ENCODE measurements at regions of chr13 and their contacts with region 1.

Region 1: GRCh38 chr13:24254146-24254841 is 55.1 kb upstream of the C1QTNF9 start:
- DNase-seq: peak; percentile 55 to 88
- ATAC-seq: peak; percentile 49 to 52 (median 51)
- H3K4me3 ChIP-seq: peak overlapping the region; percentile 72
- H3K4me3 Mint-ChIP-seq: peak overlapping the region; percentile 98
- H3K27ac ChIP-seq: peak overlapping the region; percentile 81
- H3K27ac Mint-ChIP-seq: peak overlapping the region; percentile 90 to 99
- H3K4me1 ChIP-seq: peaks cover 62% of the 10 kb centered on the region
- H3K4me1 Mint-ChIP-seq: peaks cover 76 to 88% of the 10 kb centered on the region in 2 donors
- H3K27me3 ChIP-seq: no peaks in the 10 kb centered on the region
- H3K27me3 Mint-ChIP-seq: no peaks in the 10 kb centered on the region
- CTCF ChIP-seq: no peak

Region 2: GRCh38 chr13:24020375-24020830 is 233.9 kb before region 1 on chr13:
- intact Hi-C with region 1: no loop called
- DNase-seq: peak in 1 of 2 donors; percentile 63
- ATAC-seq: peak in 1 of 3 donors; percentile 54
- H3K4me3 ChIP-seq: no peak overlapping the region
- H3K4me3 Mint-ChIP-seq: no peak overlapping the region
- H3K27ac ChIP-seq: no peak overlapping the region
- H3K27ac Mint-ChIP-seq: no peak overlapping the region
- H3K4me1 ChIP-seq: no peaks in the 10 kb centered on the region
- H3K4me1 Mint-ChIP-seq: no peaks in the 10 kb centered on the region
- H3K27me3 ChIP-seq: no peaks in the 10 kb centered on the region
- H3K27me3 Mint-ChIP-seq: no peaks in the 10 kb centered on the region
- CTCF ChIP-seq: peak; percentile 41

Region 3: DNA sequence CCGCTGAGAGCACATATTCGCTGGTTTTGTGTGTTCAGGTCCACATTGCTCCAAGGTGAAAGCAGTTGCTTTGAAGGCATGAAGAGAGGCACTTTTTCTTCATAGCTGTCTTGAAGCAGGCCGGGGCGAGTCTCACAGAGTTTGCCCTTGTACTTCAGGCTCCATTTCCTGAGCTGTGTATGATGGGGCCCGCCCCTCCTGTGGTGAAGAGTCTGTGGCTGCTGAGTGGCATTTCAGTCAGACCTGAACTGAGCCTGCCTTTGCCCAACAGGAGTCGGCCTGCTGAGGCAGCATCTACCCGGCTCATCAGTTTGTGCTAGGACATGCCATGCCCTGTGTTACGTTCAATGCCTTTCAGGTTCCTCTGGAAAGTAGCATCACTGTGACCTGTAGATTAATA is 10.7 kb after region 1 on chr13:
- intact Hi-C with region 1: loop called (anchors 1 kb)
- DNase-seq: peak; percentile 74 to 91
- ATAC-seq: peak; percentile 85 to 96 (median 95)
- H3K4me3 ChIP-seq: no peak overlapping the region
- H3K4me3 Mint-ChIP-seq: peak overlapping the region; percentile 87
- H3K27ac ChIP-seq: peak overlapping the region; percentile 93
- H3K27ac Mint-ChIP-seq: peak overlapping the region; percentile 95 to 98
- H3K4me1 ChIP-seq: peaks cover 70% of the 10 kb centered on the region
- H3K4me1 Mint-ChIP-seq: peaks cover 89 to 90% of the 10 kb centered on the region in 2 donors
- H3K27me3 ChIP-seq: no peaks in the 10 kb centered on the region
- H3K27me3 Mint-ChIP-seq: no peaks in the 10 kb centered on the region
- CTCF ChIP-seq: no peak

Region 4: GRCh38 chr13:24270639-24271141 is 16.4 kb after region 1 on chr13:
- intact Hi-C with region 1: loop called (anchors 1 kb)
- DNase-seq: peak; percentile 63 to 82
- ATAC-seq: peak; percentile 15 to 56 (median 30)
- H3K4me3 ChIP-seq: peak overlapping the region; percentile 45
- H3K4me3 Mint-ChIP-seq: peak overlapping the region; percentile 94
- H3K27ac ChIP-seq: peak overlapping the region; percentile 96
- H3K27ac Mint-ChIP-seq: peak overlapping the region; percentile 95 to 98
- H3K4me1 ChIP-seq: peaks cover 81% of the 10 kb centered on the region
- H3K4me1 Mint-ChIP-seq: peaks cover 90 to 91% of the 10 kb centered on the region in 2 donors
- H3K27me3 ChIP-seq: no peaks in the 10 kb centered on the region
- H3K27me3 Mint-ChIP-seq: peaks cover 3 to 8% of the 10 kb centered on the region in 2 donors
- CTCF ChIP-seq: no peak

Region 5: DNA sequence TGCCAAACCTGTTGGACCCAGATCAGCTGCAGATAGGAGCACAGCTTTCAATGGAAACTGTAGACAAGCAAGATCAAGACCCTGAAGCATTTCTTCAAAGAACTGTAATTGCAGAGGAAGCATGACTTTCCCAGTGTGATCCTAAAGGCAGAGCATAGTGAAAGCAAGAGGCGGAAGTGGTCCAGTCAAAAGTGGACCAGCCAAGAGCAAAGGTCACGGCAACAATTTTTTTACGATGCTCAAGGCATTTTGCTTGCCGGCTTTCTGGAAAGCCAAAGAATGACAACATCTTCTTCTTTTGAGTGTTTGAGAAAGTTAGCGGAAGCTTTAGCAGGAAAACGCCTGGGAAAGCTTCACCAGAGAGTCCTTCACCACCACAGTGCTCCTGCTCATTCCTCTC is 621.3 kb after region 1 on chr13:
- intact Hi-C with region 1: no loop called
- DNase-seq: no peak
- ATAC-seq: no peak
- H3K4me3 ChIP-seq: no peak overlapping the region
- H3K4me3 Mint-ChIP-seq: no peak overlapping the region
- H3K27ac ChIP-seq: no peak overlapping the region
- H3K27ac Mint-ChIP-seq: no peak overlapping the region
- H3K4me1 ChIP-seq: no peaks in the 10 kb centered on the region
- H3K4me1 Mint-ChIP-seq: no peaks in the 10 kb centered on the region
- H3K27me3 ChIP-seq: peaks cover 2% of the 10 kb centered on the region
- H3K27me3 Mint-ChIP-seq: peaks cover 17 to 29% of the 10 kb centered on the region in 2 donors
- CTCF ChIP-seq: no peak